ENCODE measurements at regions of chr2 and their contacts with region 1.

Region 1: DNA sequence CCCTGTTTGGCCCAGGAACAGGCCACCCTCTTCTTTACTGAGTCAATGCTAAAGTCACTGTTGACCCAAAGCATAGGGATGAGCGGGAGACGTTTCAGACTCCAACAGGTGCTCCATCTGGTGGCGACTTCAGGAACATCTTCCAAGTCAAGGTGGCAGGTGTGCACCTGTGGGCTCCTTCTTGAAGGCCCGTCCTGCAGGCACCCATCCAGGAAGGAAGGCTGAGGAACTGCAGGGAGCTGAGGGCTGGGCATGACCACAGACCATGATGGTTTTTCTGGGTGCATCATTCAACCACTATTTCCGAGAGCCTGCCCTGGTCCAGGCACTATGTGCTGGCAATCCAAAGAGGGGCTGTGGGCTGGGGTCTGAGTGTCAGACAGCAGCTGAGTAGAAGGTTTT is 142.8 kb downstream of the NDUFA10 start:
- DNase-seq: peak in 1 of 2 donors; percentile 67
- H3K4me3 ChIP-seq: no peak overlapping the region
- H3K27ac ChIP-seq: peak overlapping the region; percentile 56 to 58
- H3K4me1 ChIP-seq: peaks cover 0 to 17% (median 13%) of the 10 kb centered on the region in 4 donors
- H3K27me3 ChIP-seq: no peaks in the 10 kb centered on the region
- CTCF ChIP-seq: peak; percentile 60 to 63

Region 2: GRCh38 chr2:239035361-239036078 is 846.8 kb before region 1 on chr2:
- intact Hi-C with region 1: loop called (anchors 2 kb)
- DNase-seq: peak in 1 of 2 donors; percentile 70
- H3K4me3 ChIP-seq: no peak overlapping the region
- H3K27ac ChIP-seq: no peak overlapping the region
- H3K4me1 ChIP-seq: peaks cover 0 to 5% (median 0%) of the 10 kb centered on the region in 4 donors
- H3K27me3 ChIP-seq: peaks cover 0 to 5% of the 10 kb centered on the region in 2 donors
- CTCF ChIP-seq: peak; percentile 57 to 96

Measured in tibial artery (tissue), 4 donors.